Calu3 (cell line): ENCODE measurements at regions of chr3 and their contacts with region 1.

Region 1: DNA sequence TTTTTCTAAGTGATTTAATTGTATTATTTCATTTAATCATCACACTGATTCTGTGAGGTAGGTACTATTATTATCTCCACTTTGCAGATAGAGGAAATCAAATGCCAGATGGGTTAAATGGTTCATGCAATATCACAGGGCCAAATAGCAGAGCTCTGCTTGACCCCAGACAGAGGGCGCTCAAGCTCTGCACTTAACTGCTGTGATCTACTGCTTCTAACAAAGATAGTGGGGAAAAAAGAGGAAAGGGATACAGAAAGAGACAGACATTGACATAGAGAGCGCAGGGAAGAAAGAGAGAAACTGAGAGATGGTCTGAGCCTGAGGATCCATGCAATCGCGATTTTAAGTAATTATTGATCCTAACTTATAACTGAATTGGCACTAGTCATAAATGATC is 279.1 kb upstream of the THRB start:
- DNase-seq: peak; percentile 81
- H3K4me3 Mint-ChIP-seq: no peak overlapping the region
- H3K27ac Mint-ChIP-seq: no peak overlapping the region
- H3K4me1 Mint-ChIP-seq: peaks cover 8% of the 10 kb centered on the region
- H3K27me3 Mint-ChIP-seq: no peaks in the 10 kb centered on the region
- CTCF ChIP-seq: peak; percentile 65

Region 2: DNA sequence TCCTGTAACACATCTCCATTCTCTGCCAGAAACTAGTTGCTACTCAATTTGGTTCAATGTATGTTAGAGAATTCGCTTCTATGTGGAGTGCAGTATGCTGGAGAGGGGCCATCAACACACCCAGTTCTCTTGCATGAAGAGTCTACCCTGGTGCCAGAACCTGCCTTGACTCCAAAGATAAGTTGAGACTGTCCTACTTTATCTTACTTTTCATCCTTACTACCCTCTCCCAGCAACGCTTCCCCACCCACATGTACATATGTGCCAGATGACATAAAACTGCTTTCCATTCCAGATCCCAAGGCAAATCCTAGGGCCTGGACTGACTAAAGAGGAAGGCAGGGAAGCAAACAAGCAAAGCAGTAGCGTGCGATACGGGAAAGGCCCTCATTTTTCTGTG is 163.4 kb after region 1 on chr3:
- CTCF ChIA-PET with region 1: no interaction called
- intact Hi-C with region 1: loop called (anchors 10 kb)
- DNase-seq: no peak
- H3K4me3 Mint-ChIP-seq: no peak overlapping the region
- H3K27ac Mint-ChIP-seq: no peak overlapping the region
- H3K4me1 Mint-ChIP-seq: peaks cover 23% of the 10 kb centered on the region
- H3K27me3 Mint-ChIP-seq: no peaks in the 10 kb centered on the region
- CTCF ChIP-seq: no peak

Region 3: DNA sequence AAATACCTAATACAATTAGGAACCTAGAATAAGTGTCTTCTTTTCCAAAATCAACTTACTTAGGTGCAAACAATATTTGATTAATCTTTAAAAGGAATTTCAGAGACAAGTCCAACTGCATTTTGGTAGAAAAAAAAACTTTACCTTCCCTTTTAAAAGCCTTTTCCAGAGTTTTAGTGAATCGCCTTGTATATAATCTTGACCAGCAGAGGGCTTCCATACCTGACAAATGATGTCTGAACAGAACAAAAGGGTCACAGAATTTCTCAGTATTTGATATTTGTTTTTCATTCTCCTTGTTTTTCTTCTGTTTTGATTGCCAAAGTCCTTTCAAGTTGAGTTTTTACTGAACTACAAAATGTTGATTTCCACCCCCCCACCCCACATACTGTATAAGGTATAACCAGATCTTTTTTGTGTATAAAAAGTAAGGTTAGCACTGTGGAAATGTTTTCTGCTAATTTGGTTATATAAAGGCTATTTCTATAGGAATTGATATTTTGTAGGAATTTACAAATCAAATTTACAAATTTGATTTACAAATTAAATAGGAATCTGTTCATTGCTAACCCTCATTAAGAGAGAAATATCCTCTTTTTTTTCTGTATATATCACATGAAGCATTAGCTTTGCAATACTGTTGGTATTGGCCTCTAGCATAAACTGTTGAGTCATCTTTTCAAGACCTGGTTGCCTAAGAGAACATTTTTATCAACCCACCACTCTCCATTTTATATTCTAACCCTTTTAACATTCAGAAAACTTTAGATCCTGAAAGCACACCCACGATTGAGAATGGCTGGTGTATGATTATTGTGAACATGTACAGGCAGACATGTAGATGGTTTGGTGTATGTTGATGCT is 190.2 kb after region 1 on chr3:
- CTCF ChIA-PET with region 1: no interaction called
- intact Hi-C with region 1: loop called (anchors 5 kb)
- DNase-seq: peak; percentile 7
- H3K4me3 Mint-ChIP-seq: no peak overlapping the region
- H3K27ac Mint-ChIP-seq: no peak overlapping the region
- H3K4me1 Mint-ChIP-seq: peaks cover 13% of the 10 kb centered on the region
- H3K27me3 Mint-ChIP-seq: no peaks in the 10 kb centered on the region
- CTCF ChIP-seq: no peak

Region 4: DNA sequence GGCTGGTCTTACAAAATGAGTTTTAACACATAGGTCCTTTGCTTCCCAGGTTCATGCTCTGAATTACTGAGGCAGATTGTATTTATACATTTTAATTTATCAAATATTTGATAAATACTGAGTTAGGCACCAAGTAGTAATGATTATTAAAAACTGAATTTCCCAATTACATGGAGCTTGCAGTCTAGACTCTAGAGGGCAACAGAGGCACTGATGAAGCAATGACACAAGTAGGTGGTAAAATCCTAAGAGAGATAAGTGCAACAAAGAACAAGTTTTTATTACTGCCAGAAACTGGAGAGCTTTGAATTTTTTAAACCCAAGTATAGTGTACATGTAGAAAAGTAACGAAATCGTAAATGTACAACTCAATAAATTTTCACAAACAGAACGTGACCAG is 248.0 kb after region 1 on chr3:
- CTCF ChIA-PET with region 1: no interaction called
- intact Hi-C with region 1: loop called (anchors 5 kb)
- DNase-seq: peak; percentile 5
- H3K4me3 Mint-ChIP-seq: no peak overlapping the region
- H3K27ac Mint-ChIP-seq: no peak overlapping the region
- H3K4me1 Mint-ChIP-seq: no peaks in the 10 kb centered on the region
- H3K27me3 Mint-ChIP-seq: no peaks in the 10 kb centered on the region
- CTCF ChIP-seq: peak; percentile 17

Region 5: DNA sequence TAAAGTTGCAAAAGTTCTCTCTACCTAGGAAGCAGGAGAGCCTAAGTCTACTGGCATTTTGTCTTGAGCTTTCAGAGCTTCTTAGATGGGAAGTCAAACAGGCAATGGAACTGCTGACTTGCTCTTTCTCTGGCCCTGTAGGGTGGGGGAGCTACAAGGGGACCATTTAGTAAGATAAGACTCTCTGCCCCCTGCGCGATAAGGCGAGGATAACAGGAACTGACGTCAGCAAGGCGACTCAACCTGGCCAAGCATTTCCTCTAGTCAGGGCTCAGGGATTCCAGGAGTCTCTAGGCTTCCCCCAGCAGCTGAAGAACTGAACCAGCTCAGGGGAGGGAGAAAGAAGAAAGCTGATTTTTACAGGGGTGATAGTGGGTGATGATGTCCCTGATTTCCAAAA is 660.1 kb after region 1 on chr3:
- CTCF ChIA-PET with region 1: interaction called, 3 read pairs
- intact Hi-C with region 1: loop called (anchors 5 kb)
- DNase-seq: peak; percentile 56
- H3K4me3 Mint-ChIP-seq: peak overlapping the region; percentile 53
- H3K27ac Mint-ChIP-seq: peak overlapping the region; percentile 88
- H3K4me1 Mint-ChIP-seq: peaks cover 49% of the 10 kb centered on the region
- H3K27me3 Mint-ChIP-seq: no peaks in the 10 kb centered on the region
- CTCF ChIP-seq: no peak